ENCODE measurements at regions of chr12 and their contacts with region 1.

Region 1: DNA sequence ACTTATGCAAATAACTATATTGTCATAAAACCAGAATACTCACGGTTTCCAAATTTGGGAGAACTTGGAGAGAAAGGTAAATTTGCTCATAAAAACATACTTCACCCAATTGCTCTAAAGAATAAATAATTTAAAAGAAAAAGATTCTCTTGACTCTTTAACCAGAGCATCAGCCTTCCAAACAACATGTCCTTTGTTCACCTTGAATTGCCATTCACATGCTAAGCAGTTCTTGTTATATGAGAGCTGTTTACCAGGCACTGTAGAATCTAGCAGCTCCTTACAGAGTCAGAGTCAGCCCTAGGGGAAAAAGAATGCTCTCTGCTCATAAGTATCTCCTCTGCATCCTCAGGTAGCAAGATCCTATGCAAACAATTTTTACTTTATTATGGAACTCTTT is 10.2 kb downstream of the SLCO1A2 start:
- ATAC-seq: peak in 5 of 8 experiments; percentile 53 to 87 (median 65)
- H3K4me3 ChIP-seq: no peak overlapping the region
- H3K27ac ChIP-seq: no peak overlapping the region
- H3K4me1 ChIP-seq: peaks cover 0 to 6% of the 10 kb centered on the region in 2 donors

Region 2: DNA sequence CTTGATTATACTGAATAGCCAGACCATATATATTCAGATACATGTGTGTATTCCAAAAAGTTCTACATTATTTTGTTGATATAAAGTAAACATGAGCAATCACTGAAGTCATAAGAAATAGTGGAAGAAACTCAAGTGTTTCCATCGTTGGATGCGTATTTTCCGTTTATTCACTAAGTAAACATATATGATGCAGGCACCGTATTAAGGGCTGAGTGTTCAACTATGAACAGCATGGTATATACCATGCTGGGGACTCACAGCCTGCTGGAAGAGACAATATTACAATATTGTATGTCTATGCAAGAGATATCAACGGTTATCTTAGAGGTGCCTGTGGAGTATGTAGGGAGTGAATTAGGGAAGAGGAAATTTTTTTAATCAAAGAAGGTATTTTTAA is 114.1 kb after region 1 on chr12:
- in situ Hi-C with region 1: loop called in 3 of 9 experiments (anchors 10 to 25 kb)
- ATAC-seq: no peak
- H3K4me3 ChIP-seq: peak overlapping the region; percentile 55 to 69 (median 59)
- H3K27ac ChIP-seq: no peak overlapping the region
- H3K4me1 ChIP-seq: peaks cover 6 to 8% of the 10 kb centered on the region in 2 donors

Region 3: DNA sequence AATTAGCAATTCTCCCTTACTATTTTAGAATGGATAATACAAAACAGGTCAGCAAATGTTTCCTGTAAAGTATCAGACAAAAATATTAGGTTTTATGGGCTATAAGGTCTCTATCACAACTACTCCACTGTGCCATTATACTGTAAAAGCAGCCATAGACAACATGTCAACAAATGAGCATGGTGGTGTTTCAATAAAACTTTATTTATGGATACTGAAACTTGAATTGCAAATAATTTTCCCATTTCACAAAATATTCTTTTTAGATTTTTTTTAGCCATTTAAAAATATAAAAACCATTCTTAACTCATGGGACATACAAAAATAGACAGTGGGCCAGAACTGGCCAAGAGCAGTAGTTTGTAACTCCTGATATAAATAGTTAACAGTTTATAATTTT is 161.4 kb after region 1 on chr12:
- in situ Hi-C with region 1: no loop called
- ATAC-seq: no peak
- H3K4me3 ChIP-seq: no peak overlapping the region
- H3K27ac ChIP-seq: no peak overlapping the region
- H3K4me1 ChIP-seq: no peaks in the 10 kb centered on the region

Region 4: DNA sequence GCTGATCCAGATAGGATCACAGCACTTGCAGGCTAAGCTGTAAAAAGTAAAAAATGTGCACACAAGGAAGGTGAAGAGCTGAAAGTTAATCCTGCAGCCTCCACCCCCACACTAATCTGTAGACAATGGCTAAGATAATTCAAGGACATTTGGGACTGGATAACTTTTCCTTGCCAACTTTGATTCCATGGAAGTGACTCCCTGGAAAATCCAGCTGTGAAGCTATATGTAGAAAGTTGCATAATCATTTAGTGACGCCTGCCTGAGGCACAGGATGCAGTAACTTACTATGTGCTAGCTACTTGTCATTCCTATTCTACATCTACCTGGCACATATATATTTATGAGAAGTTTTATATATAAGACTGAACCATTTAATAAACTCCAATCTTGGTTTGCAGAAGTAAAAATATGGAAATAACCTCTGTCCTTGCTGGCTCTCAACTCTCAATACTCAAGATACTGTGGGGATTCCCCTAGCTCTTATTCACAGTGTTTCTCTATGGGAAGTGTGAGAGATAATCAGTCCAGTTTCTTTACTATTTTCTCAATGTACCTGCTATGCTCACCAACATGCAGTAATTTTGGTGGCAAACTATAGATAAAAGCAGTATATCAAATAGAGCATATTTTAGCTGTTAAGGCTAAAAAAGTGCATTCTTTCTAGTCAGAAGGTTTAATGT is 318.3 kb after region 1 on chr12:
- in situ Hi-C with region 1: loop called in 1 of 9 experiments (anchors 25 kb)
- ATAC-seq: peak in 1 of 8 experiments; percentile 46
- H3K4me3 ChIP-seq: no peak overlapping the region
- H3K27ac ChIP-seq: no peak overlapping the region
- H3K4me1 ChIP-seq: peaks cover 0 to 8% of the 10 kb centered on the region in 2 donors

Measured in motor neuron (in vitro differentiated cells).